Activated B cell treated with CpG ODN at 0.5 μM for 24 hours (primary cell): ENCODE measurements at regions of chrX and their contacts with region 1.

Region 1: DNA sequence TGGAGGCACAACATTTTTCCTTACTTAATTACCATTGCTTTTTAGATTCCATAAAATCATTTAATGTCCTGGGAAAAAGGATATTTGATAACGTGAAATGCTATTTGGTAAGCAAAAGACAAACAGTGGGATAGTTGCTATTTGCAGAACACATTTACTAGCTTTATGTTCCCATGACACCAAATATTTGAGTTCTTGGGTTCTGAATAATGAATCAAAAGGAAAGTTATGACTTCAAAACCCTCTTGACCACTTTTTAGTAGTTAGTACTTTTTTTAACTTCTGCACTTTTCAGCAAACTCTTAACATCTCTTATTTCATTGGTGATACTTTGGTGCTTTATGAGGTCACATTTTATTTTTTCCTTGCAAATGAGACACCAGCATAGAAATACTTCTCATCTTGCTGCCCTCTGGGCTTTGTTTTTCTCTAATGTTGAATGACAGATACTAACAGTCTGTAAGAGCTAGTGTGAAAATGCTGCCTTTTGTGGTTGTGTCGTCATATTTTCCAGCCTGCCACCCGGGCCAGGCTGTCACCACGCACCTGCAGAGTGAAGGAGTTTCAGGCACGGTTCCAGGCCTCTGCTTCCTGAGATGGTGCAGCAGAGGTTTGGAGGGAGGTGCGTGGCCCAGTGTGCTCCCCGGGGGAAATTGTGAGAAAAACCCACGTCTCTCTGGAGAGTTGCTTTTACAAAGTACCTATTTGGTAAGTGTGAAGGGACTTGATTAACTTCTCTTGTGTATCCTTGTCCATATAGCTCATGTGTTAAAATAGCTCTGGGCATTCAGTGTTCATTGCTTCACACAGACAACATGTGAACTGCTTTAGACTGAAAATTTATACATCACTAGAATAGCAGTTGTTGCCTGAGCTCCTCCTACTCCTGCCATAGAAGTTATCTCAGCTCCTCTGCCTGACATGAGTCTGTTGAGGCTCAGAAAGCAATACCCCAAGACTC is 34.7 kb downstream of the MSL3 start:
- DNase-seq: peak; percentile 48
- ATAC-seq: peak; percentile 91
- H3K4me3 Mint-ChIP-seq: peak overlapping the region; percentile 63
- H3K27ac Mint-ChIP-seq: peak overlapping the region; percentile 90
- H3K4me1 Mint-ChIP-seq: peaks cover 46% of the 10 kb centered on the region
- H3K27me3 Mint-ChIP-seq: no peaks in the 10 kb centered on the region
- CTCF ChIP-seq: no peak

Region 2: GRCh38 chrX:11758400-11759171 is 34.2 kb before region 1 on chrX:
- CTCF ChIA-PET with region 1: no interaction called
- POLR2A ChIA-PET with region 1: interaction called, 6 read pairs
- intact Hi-C with region 1: loop called (anchors 1 kb)
- DNase-seq: peak; percentile 81
- ATAC-seq: peak; percentile 65
- H3K4me3 Mint-ChIP-seq: peak overlapping the region; percentile 94
- H3K27ac Mint-ChIP-seq: peak overlapping the region; percentile 95
- H3K4me1 Mint-ChIP-seq: peaks cover 35% of the 10 kb centered on the region
- H3K27me3 Mint-ChIP-seq: no peaks in the 10 kb centered on the region
- CTCF ChIP-seq: no peak

Region 3: DNA sequence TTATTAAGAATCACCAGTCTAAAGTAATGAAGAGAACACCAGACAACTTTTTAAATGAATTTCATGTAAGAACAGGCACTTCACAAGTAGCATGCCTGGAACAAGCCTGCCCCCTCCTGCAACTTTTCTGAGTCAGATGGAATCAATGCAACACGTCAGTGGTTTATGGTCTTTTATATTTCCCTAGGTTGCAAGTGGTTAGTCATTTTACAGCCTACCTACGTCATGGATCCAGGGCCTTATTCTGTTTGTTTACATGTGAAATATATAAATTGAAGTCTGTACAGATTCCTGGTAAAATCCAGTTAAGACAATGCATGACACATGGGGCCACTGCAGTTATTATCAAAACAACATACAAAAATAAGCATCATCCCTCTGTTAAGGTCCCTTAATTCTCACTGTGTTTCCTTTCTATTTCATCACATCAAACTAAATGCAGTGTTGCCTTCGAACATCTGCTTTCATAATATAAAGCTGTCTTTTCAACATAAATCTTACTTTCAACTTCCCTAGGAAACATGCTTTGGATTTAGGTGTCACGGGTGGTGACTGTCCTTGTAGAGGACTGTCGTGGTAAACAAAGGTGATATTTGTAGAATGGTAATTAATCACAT is 654.8 kb after region 1 on chrX:
- CTCF ChIA-PET with region 1: no interaction called
- POLR2A ChIA-PET with region 1: no interaction called
- intact Hi-C with region 1: loop called (anchors 10 kb)
- DNase-seq: no peak
- ATAC-seq: no peak
- H3K4me3 Mint-ChIP-seq: no peak overlapping the region
- H3K27ac Mint-ChIP-seq: no peak overlapping the region
- H3K4me1 Mint-ChIP-seq: peaks cover 2% of the 10 kb centered on the region
- H3K27me3 Mint-ChIP-seq: no peaks in the 10 kb centered on the region
- CTCF ChIP-seq: no peak